CD8-positive, alpha-beta T cell (primary cell): ENCODE measurements at regions of chr7 and their contacts with region 1.

Region 1: GRCh38 chr7:125966278-125967048 is 1036.8 kb upstream of the POT1 start:
- DNase-seq: no peak
- ATAC-seq: no peak
- H3K4me3 ChIP-seq: no peak overlapping the region
- H3K4me3 Mint-ChIP-seq: no peak overlapping the region
- H3K27ac ChIP-seq: no peak overlapping the region
- H3K27ac Mint-ChIP-seq: no peak overlapping the region
- H3K4me1 ChIP-seq: no peaks in the 10 kb centered on the region
- H3K4me1 Mint-ChIP-seq: no peaks in the 10 kb centered on the region
- H3K27me3 ChIP-seq: no peaks in the 10 kb centered on the region
- H3K27me3 Mint-ChIP-seq: no peaks in the 10 kb centered on the region
- CTCF ChIP-seq: no peak

Region 2: GRCh38 chr7:125491137-125491536 is 475.3 kb before region 1 on chr7:
- CTCF ChIA-PET with region 1: no interaction called
- POLR2A ChIA-PET with region 1: no interaction called
- intact Hi-C with region 1: no loop called
- DNase-seq: no peak
- ATAC-seq: no peak
- H3K4me3 ChIP-seq: no peak overlapping the region
- H3K4me3 Mint-ChIP-seq: no peak overlapping the region
- H3K27ac ChIP-seq: no peak overlapping the region
- H3K27ac Mint-ChIP-seq: no peak overlapping the region
- H3K4me1 ChIP-seq: no peaks in the 10 kb centered on the region
- H3K4me1 Mint-ChIP-seq: no peaks in the 10 kb centered on the region
- H3K27me3 ChIP-seq: no peaks in the 10 kb centered on the region
- H3K27me3 Mint-ChIP-seq: no peaks in the 10 kb centered on the region
- CTCF ChIP-seq: no peak

Region 3: GRCh38 chr7:125924037-125924436 is 42.4 kb before region 1 on chr7:
- CTCF ChIA-PET with region 1: no interaction called
- POLR2A ChIA-PET with region 1: no interaction called
- intact Hi-C with region 1: loop called in 1 of 2 experiments (anchors 1 kb)
- DNase-seq: no peak
- ATAC-seq: no peak
- H3K4me3 ChIP-seq: no peak overlapping the region
- H3K4me3 Mint-ChIP-seq: no peak overlapping the region
- H3K27ac ChIP-seq: no peak overlapping the region
- H3K27ac Mint-ChIP-seq: no peak overlapping the region
- H3K4me1 ChIP-seq: no peaks in the 10 kb centered on the region
- H3K4me1 Mint-ChIP-seq: no peaks in the 10 kb centered on the region
- H3K27me3 ChIP-seq: no peaks in the 10 kb centered on the region
- H3K27me3 Mint-ChIP-seq: no peaks in the 10 kb centered on the region
- CTCF ChIP-seq: no peak